Caco-2 (cell line): ENCODE measurements at regions of chr2 and their contacts with region 1.

Region 1: DNA sequence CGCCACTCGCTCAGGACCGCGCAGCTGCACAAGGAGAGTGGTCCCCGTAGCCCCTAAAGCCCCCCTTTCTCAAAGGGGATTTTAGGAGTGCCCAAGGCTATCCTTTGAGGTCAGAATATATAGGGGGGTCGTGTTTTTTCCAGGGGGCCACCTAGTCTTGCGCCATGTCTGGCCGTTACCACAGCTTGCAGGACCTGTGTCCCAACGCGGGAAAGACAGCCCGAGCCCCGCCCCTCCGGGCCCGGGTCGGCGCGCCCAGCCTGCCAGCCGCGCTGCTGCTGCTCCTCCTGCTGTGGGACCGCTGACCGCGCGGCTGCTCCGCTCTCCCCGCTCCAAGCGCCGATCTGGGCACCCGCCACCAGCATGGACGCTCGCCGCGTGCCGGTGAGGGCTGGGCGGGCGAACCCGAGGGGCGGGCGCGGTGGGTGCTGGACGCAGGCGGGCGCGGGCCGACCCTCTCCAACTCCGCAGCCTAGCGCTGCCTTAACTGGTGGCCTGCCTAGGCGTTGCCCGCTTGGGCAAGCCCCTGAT is at the start of gene CDCA7:
- DNase-seq: peak; percentile 82 to 91
- H3K4me3 ChIP-seq: peak within 1 kb of the TSS; percentile 95
- H3K4me3 Mint-ChIP-seq: peak within 1 kb of the TSS; percentile 96
- H3K27ac Mint-ChIP-seq: peak within 1 kb of the TSS; percentile 97
- H3K4me1 ChIP-seq: peaks cover 22% of the 10 kb centered on the region
- H3K4me1 Mint-ChIP-seq: peaks cover 29% of the 10 kb centered on the region
- H3K27me3 ChIP-seq: no peaks in the 10 kb centered on the region
- H3K27me3 Mint-ChIP-seq: no peaks in the 10 kb centered on the region
- CTCF ChIP-seq: no peak
- total RNA-seq, gene CDCA7: 51.1 and 58.1 TPM in 2 replicates

Region 2: DNA sequence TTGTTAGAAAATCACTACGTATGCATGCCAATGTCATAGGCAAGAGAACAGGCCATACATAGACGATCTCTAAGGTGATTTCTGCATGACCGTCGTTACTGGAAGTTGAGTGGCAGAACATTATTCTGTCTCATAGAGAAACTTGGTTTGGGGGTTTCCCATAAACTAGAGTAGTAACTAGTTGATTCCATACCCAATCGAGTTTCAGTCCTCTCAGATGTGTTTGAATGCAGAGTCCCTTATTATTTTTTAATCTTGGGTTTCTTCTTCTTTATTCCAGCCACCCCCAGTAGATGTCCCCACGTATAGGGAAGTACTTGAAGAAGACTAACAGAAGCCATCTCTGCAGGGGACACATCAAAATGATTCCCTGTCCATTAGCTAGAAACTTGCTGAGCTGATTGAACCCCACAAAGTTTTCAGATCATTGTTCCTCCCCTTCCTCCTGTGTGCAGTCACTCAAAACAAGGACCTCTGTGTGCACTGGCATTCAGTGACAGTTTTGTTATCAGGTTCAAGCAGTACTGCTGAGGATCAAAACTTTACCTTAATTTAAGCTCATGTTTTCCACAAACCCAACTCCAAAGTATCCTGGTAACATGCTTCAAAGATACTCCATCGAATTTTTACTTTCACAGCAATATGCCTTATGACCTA is 68.4 kb before region 1 on chr2:
- CTCF ChIA-PET with region 1: interaction called, 3 read pairs
- POLR2A ChIA-PET with region 1: no interaction called
- intact Hi-C with region 1: loop called (anchors 1 kb)
- DNase-seq: no peak
- H3K4me3 ChIP-seq: no peak overlapping the region
- H3K4me3 Mint-ChIP-seq: no peak overlapping the region
- H3K27ac Mint-ChIP-seq: no peak overlapping the region
- H3K4me1 ChIP-seq: no peaks in the 10 kb centered on the region
- H3K4me1 Mint-ChIP-seq: no peaks in the 10 kb centered on the region
- H3K27me3 ChIP-seq: no peaks in the 10 kb centered on the region
- H3K27me3 Mint-ChIP-seq: no peaks in the 10 kb centered on the region
- CTCF ChIP-seq: peak in 1 of 2 experiments; percentile 5

Region 3: DNA sequence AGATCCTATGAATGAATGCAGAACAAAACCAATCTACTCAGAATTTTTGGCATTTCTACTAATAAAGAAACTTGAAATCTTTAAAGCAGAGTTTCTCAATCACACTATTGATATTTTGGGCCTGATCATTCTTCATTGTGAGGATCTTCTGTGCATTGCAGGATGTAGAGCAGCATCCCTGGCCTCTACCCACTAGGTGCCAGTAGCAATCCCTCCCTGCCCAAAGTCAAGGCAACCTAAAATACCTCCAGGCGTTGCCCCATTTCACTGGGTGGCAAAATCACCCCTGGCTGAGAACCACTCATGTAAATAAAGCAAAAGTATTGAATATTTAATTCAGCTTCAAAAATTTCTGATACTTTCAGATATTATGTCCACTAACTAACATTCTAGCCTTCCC is 397.5 kb after region 1 on chr2:
- CTCF ChIA-PET with region 1: no interaction called
- POLR2A ChIA-PET with region 1: no interaction called
- intact Hi-C with region 1: no loop called
- DNase-seq: no peak
- H3K4me3 ChIP-seq: no peak overlapping the region
- H3K4me3 Mint-ChIP-seq: no peak overlapping the region
- H3K27ac Mint-ChIP-seq: no peak overlapping the region
- H3K4me1 ChIP-seq: no peaks in the 10 kb centered on the region
- H3K4me1 Mint-ChIP-seq: peaks cover 13% of the 10 kb centered on the region
- H3K27me3 ChIP-seq: no peaks in the 10 kb centered on the region
- H3K27me3 Mint-ChIP-seq: no peaks in the 10 kb centered on the region
- CTCF ChIP-seq: peak in 1 of 2 experiments; percentile 19